OCI-LY7 (cell line): ENCODE measurements at regions of chr1 and their contacts with region 1.

Region 1: GRCh38 chr1:58047265-58047858 is 499.2 kb downstream of the OMA1 start:
- DNase-seq: peak; percentile 33
- H3K4me3 ChIP-seq: no peak overlapping the region
- H3K27ac ChIP-seq: no peak overlapping the region
- H3K4me1 ChIP-seq: no peaks in the 10 kb centered on the region
- CTCF ChIP-seq: peak; percentile 82

Region 2: GRCh38 chr1:56831871-56832693 is 1215.3 kb before region 1 on chr1:
- CTCF ChIA-PET with region 1: no interaction called
- POLR2A ChIA-PET with region 1: no interaction called
- intact Hi-C with region 1: loop called (anchors 2 kb)
- DNase-seq: peak; percentile 63
- H3K4me3 ChIP-seq: no peak overlapping the region
- H3K27ac ChIP-seq: no peak overlapping the region
- H3K4me1 ChIP-seq: no peaks in the 10 kb centered on the region
- CTCF ChIP-seq: peak; percentile 99

Region 3: DNA sequence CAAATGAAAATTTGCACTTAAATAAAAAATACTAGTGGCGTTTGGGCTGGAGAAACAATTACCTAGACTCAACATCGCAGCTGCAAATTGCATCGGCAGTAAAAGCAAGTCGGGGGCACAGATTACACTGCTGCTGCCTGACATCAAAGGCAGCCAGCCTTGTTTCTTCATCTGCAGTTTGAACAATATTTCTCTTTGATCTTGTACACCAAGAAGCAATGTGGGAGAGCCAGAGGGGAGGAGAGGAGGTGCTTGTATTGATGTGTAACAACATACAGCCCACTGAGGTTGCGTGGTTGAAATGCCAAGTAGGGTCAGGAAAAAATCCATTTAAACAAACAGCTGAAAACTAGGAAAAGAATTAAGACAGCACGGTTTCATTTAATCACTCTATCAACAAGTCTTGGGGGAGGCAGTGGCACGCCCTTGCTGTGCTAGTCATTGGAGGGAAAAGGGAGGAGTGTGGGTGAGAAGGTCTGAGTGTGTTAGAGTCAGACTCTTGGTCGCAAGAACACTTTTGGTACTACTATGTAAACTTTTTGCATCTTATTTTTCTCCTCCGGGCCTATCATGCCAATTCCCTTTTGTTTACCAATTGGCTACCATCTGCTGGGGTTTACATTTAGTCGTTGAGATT is 42.7 kb after region 1 on chr1:
- CTCF ChIA-PET with region 1: no interaction called
- POLR2A ChIA-PET with region 1: no interaction called
- intact Hi-C with region 1: no loop called
- DNase-seq: no peak
- H3K4me3 ChIP-seq: no peak overlapping the region
- H3K27ac ChIP-seq: no peak overlapping the region
- H3K4me1 ChIP-seq: no peaks in the 10 kb centered on the region
- CTCF ChIP-seq: no peak